ENCODE measurements at regions of chr12 and their contacts with region 1.

Region 1: DNA sequence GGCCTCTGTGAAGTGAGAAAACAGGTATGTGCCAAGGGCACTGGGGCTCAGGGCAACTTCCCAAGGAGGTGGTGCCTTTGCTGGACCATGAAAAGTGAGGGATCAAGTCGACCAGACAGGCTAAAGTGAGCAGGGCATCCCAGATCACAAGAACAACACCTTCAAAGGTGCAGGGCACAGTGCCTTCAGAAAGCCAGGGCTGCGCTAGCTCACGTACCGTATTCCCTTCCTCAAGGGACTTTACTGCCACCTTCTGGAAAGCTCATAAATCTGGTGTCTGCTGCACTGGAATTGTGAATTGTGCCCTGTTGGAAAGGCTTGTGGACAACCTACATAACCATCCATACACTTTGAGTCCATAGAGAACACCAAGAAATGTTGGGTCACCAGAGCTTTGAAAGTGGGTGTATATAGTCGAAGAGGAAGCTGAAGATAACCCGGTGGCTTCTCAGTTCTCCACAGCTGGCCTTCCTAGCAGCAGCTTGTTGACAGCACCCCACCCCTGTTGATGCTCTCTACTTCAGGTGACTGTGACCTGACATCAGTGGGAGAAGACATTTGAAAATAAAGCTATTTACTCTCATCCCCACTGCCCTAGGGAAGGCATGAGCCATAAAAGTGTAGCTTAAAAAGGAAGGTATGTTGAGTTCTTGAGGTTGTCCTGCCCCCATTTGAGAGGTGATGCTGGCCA is 24.5 kb downstream of the FIGNL2 start:
- DNase-seq: peak; percentile 24
- H3K4me3 ChIP-seq: no peak overlapping the region
- H3K27ac ChIP-seq: no peak overlapping the region
- H3K27me3 ChIP-seq: no peaks in the 10 kb centered on the region
- CTCF ChIP-seq: peak; percentile 59

Region 2: GRCh38 chr12:51531978-51532497 is 292.0 kb before region 1 on chr12:
- CTCF ChIA-PET with region 1: interaction called, 15 read pairs
- POLR2A ChIA-PET with region 1: no interaction called
- DNase-seq: peak; percentile 48
- H3K4me3 ChIP-seq: no peak overlapping the region
- H3K27ac ChIP-seq: no peak overlapping the region
- H3K27me3 ChIP-seq: no peaks in the 10 kb centered on the region
- CTCF ChIP-seq: peak; percentile 94

Region 3: DNA sequence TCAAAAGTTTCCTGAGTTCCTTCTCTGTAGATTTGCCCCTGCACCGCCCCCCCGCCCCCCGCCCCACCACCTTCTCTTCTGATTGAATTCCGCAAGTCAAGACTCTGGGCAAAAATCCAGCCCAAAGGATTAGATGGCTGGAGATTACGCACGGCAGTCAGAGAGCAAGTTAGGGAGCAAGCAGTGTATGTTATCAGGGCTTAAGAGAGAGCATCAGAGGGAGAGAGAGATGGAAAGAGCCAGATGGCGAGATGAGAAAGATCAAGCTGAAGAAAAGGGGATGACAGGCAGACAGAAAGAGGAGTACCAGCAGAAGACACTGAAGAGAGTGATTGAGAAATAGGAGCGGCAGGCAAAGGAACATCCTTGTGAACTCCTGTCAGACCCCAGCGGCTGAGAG is 50.0 kb after region 1 on chr12:
- CTCF ChIA-PET with region 1: interaction called, 18 read pairs
- POLR2A ChIA-PET with region 1: no interaction called
- DNase-seq: no peak
- H3K4me3 ChIP-seq: no peak overlapping the region
- H3K27ac ChIP-seq: no peak overlapping the region
- H3K27me3 ChIP-seq: peaks cover 3% of the 10 kb centered on the region
- CTCF ChIP-seq: no peak

Measured in AG04450 (cell line).